Activated T-helper 1 cell treated with anti-CD3 and anti-CD28 coated beads, Interleukin-12 subunit alpha, Interleukin-12 subunit beta, Interleukin-2, Interleukin-4 antibody, amounts not matched to agents 30 ng/mL and 10 ng/mL and 1 ng/mL, durations not matched to agents 14 hours and 24 hours and 36 hours (primary cell): ENCODE measurements at regions of chr10 and their contacts with region 1.

Region 1: DNA sequence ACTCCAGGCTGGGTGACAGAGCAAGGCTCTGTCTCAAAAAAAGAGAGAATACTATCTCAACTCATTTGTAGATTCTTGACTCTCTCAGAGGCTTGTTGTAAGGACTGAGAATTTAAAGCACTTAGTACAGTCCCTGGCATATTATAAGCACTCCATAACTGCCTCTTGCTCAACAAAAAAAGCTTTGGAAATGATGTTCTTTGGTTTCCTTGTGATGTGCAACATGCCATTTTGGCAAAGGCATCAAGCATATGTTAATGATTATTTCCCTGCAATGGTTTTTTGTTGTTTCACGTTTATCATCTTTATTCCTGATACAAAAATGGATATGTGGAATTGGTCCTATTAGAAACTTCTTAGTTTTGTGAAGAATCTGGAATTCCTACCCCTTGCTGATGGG is 15.7 kb downstream of the NOLC1 start:
- DNase-seq: no peak
- H3K4me3 Mint-ChIP-seq: no peak overlapping the region
- H3K27ac Mint-ChIP-seq: no peak overlapping the region
- H3K4me1 Mint-ChIP-seq: peaks cover 10% of the 10 kb centered on the region
- H3K27me3 Mint-ChIP-seq: no peaks in the 10 kb centered on the region

Region 2: GRCh38 chr10:102132563-102133372 is 35.1 kb before region 1 on chr10 and contains the start of gene PPRC1:
- intact Hi-C with region 1: loop called (anchors 1 kb)
- DNase-seq: peak; percentile 97
- H3K4me3 Mint-ChIP-seq: peak within 1 kb of the TSS; percentile 95
- H3K27ac Mint-ChIP-seq: peak within 1 kb of the TSS; percentile 94
- H3K4me1 Mint-ChIP-seq: peaks cover 29% of the 10 kb centered on the region
- H3K27me3 Mint-ChIP-seq: no peaks in the 10 kb centered on the region
- total RNA-seq, gene PPRC1: 112 and 115 TPM in 2 replicates

Region 3: GRCh38 chr10:102225646-102226541 is 58.0 kb after region 1 on chr10 and contains the start of gene ELOVL3:
- intact Hi-C with region 1: loop called (anchors 1 kb)
- DNase-seq: peak; percentile 87
- H3K4me3 Mint-ChIP-seq: peak within 1 kb of the TSS; percentile 63
- H3K27ac Mint-ChIP-seq: no peak within 1 kb of the TSS
- H3K4me1 Mint-ChIP-seq: peaks cover 21% of the 10 kb centered on the region
- H3K27me3 Mint-ChIP-seq: peaks cover 57% of the 10 kb centered on the region
- total RNA-seq, gene ELOVL3: 0.18 TPM in 1 of 2 replicates, not detected in the other

Region 4: DNA sequence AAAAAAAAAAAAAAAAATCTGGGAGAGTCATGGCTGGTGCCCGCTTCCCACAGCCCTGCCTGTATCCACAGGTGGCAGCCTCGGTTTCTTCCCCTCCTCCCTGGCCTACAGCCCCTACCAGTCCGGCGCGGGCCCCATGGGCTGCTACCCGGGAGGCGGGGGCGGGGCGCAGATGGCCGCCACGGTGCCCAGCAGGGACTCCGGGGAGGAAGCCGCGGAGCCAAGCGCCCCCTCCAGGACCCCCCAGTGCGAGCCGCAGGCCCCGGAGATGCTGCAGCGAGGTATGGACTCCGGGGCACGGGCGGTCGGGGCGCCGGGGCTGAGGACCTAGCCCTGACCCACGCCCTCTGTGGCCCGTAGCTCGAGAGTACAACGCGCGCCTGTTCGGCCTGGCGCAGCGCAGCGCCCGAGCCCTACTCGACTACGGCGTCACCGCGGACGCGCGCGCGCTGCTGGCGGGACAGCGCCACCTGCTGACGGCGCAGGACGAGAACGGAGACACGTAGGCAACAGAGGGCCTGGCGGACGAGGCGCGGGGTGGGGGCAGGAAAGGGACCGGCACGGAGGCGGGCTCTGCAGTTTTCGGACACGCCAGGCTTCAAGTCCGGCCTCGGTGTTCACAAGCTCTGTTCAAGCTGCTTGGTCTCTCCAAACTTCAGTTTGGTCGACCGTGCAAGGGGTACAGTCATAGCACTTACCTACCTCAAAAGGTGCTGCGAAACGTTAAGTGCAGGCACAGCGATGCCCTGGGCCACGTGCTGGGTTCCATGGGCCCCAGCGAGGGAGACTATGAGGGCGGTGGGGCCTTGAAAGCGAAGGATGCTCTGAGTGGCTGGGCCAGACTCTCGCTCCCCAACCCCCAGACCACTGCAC is 231.6 kb after region 1 on chr10:
- intact Hi-C with region 1: loop called (anchors 1 kb)
- DNase-seq: peak; percentile 86
- H3K4me3 Mint-ChIP-seq: peak overlapping the region; percentile 90
- H3K27ac Mint-ChIP-seq: peak overlapping the region; percentile 63
- H3K4me1 Mint-ChIP-seq: peaks cover 42% of the 10 kb centered on the region
- H3K27me3 Mint-ChIP-seq: no peaks in the 10 kb centered on the region

Region 5: GRCh38 chr10:102583435-102584417 is 415.9 kb after region 1 on chr10:
- intact Hi-C with region 1: loop called (anchors 1 kb)
- DNase-seq: peak; percentile 73
- H3K4me3 Mint-ChIP-seq: no peak overlapping the region
- H3K27ac Mint-ChIP-seq: no peak overlapping the region
- H3K4me1 Mint-ChIP-seq: peaks cover 16% of the 10 kb centered on the region
- H3K27me3 Mint-ChIP-seq: peaks cover 2% of the 10 kb centered on the region